Dendritic cell treated with granulocyte-macrophage colony-stimulating factor and Interleukin-4, amounts not matched to agents 40 ng/mL and 50 ng/mL, for 4 days (primary cell): ENCODE measurements at regions of chr1 and their contacts with region 1.

Region 1: DNA sequence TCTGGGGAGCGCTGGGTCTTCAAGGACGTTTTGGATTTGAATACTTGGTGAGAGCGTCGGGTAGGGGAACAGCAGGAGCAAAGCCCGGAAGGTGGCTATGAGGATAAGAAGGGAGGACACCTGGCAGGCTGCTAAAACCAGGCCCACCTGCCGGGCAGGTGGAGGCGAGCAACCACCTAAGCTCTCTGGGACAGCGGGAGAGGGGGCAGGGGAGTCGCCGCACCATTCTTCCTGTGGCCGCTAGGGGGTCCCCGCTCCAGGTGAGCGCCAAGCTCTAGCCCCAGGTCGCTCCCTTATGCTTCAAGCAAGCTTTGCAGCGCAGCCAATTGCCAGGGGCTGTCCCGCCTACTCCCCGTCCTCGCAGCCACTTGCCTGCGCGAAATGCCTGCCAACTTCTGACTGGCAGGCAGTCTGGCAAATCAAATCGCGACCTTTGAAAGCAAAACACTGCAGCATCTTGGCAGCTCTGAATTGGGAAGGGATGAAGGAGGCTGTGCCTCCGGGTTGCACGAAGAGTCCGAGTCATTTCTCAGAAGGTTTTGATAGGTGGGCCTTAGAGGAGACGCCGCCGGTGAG is at the start of gene NIPAL3:
- H3K4me3 Mint-ChIP-seq: peak within 1 kb of the TSS; percentile 94
- H3K27ac Mint-ChIP-seq: peak within 1 kb of the TSS; percentile 79
- H3K4me1 Mint-ChIP-seq: peaks cover 69% of the 10 kb centered on the region
- H3K27me3 Mint-ChIP-seq: no peaks in the 10 kb centered on the region

Region 2: DNA sequence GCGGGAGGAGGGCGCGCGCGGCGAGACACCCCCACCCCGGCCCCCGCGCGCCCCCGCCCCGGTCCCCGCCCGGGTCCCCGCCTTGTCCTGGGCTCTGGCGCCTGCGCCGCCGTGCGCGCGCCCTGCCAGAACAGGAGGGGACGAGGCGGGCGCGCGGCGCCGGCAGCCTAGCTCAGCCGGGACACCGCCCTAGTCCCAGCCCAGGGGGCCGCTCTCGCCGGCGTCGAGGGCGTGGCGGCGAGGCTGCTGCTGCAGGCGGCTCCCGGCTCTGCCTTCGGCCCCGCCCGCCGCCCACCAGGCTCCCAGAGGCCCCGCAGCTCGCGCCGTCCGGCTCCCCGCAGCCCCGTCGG is 87.3 kb after region 1 on chr1 and contains the start of gene RCAN3:
- intact Hi-C with region 1: loop called (anchors 5 kb)
- H3K4me3 Mint-ChIP-seq: peak within 1 kb of the TSS; percentile 80
- H3K27ac Mint-ChIP-seq: peak within 1 kb of the TSS; percentile 92
- H3K4me1 Mint-ChIP-seq: peaks cover 44% of the 10 kb centered on the region
- H3K27me3 Mint-ChIP-seq: peaks cover 3% of the 10 kb centered on the region

Region 3: DNA sequence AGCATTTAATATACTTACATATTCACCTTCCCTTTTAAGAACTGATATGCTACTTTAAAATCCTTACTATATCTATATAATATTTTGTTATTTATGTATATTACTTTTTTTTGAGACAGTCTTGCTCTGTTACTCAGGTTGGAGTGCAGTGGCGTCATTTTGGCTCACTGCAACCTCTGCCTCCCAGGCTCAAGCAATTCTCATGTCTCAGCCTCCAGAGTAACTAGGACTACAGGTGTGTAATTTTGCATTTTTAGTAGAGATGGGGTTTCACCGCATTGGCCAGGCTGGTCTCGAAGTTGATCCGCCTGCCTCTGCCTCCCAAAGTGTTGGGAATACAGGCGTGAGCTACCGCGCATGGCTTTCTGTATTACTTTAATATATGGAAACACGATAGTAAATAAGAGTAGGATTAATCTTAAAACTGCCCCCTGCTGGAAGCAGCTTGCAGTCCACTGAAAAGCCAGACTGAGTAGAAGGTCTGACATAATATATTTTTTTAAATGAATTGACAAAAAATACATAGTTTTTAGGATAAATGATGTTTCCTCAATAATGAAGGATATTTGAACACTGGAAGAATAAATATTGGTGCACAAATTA is 111.6 kb after region 1 on chr1:
- intact Hi-C with region 1: loop called (anchors 5 kb)
- H3K4me3 Mint-ChIP-seq: no peak overlapping the region
- H3K27ac Mint-ChIP-seq: no peak overlapping the region
- H3K4me1 Mint-ChIP-seq: no peaks in the 10 kb centered on the region
- H3K27me3 Mint-ChIP-seq: no peaks in the 10 kb centered on the region

Region 4: DNA sequence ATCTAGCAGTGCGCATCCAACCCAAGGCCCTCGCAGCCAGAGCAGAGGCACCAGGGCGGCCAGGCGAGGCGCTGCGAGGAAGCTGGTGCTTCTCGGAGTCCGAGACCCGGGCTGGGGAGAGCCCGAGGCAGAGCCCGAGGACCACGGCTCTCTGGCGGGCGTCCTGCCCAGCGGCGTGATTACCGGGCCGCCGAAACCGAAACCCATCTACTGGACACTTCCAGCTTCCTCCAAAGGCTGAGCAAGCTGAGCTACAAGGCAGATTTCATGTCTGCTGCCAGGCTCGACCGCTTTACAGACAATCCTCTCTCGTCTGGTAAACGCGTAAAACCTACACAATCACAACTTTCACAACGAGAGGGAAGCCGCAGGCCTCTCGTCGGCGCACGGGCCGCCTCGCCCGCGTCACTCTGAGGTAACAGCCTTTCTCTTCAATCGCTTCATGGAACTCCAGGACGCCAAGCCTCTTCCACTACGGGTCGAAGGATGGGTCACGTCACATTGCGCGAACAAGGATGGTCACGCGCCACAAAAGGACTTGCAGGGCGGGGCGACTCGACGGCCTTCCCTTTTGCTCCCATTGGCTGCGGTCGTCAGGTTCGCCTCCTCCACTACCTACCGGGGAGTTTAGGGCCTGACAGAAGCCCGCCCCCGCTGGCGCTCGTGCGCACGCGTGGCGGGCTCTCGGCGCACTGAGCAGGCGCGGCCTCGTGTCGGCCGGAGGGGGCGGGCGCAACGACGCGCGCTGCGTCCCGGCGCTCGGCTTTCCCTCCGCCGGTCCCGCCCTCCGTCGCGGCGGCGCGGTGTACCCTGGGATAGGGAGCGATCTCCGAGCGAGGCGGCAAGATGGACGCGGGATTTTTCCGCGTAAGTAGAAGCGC is 227.3 kb after region 1 on chr1 and contains the start of gene SRRM1:
- intact Hi-C with region 1: loop called (anchors 5 kb)
- H3K4me3 Mint-ChIP-seq: peak within 1 kb of the TSS; percentile 82
- H3K27ac Mint-ChIP-seq: peak within 1 kb of the TSS; percentile 90
- H3K4me1 Mint-ChIP-seq: peaks cover 47% of the 10 kb centered on the region
- H3K27me3 Mint-ChIP-seq: no peaks in the 10 kb centered on the region